Ovary (tissue), 10 donors: ENCODE measurements at regions of chr16 and their contacts with region 1.

Region 1: GRCh38 chr16:15874745-15875314 is 13.6 kb downstream of the CEP20 start:
- DNase-seq: peak; percentile 49 to 66 (median 57)
- H3K4me3 ChIP-seq: no peak overlapping the region
- H3K27ac ChIP-seq: peak overlapping the region in 1 of 2 donors; percentile 16
- H3K4me1 ChIP-seq: no peaks in the 10 kb centered on the region
- H3K27me3 ChIP-seq: no peaks in the 10 kb centered on the region
- CTCF ChIP-seq: peak; percentile 20 to 45 (median 33)
- EP300 ChIP-seq: no peak
- POLR2A ChIP-seq: no peak

Region 2: DNA sequence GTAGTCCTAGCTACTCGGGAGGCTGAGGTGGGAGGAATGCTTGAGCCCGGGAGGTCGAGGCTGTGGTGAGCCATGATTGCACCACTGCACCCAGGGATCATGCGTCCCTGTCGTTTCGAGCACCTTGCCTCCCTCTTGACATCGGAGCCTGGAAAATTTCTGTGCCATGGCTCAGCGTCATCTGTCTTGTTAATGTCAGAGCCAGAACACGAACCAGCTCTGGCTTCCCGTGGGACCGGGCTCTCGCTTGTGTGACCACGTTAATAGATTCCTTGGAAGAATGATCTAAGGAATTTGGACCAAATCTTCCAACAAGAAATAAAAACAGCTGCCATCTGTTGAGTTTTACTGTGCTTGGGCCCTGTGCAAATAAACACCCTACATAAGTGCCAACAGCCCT is 192.3 kb after region 1 on chr16:
- intact Hi-C with region 1: loop called in 1 of 4 experiments (anchors 5 kb)
- DNase-seq: no peak
- H3K4me3 ChIP-seq: no peak overlapping the region
- H3K27ac ChIP-seq: no peak overlapping the region
- H3K4me1 ChIP-seq: peaks cover 4% of the 10 kb centered on the region
- H3K27me3 ChIP-seq: no peaks in the 10 kb centered on the region
- CTCF ChIP-seq: no peak
- EP300 ChIP-seq: no peak
- POLR2A ChIP-seq: no peak